Posterior cingulate gyrus (tissue), 11 donors: ENCODE measurements at regions of chr5 and their contacts with region 1.

Region 1: DNA sequence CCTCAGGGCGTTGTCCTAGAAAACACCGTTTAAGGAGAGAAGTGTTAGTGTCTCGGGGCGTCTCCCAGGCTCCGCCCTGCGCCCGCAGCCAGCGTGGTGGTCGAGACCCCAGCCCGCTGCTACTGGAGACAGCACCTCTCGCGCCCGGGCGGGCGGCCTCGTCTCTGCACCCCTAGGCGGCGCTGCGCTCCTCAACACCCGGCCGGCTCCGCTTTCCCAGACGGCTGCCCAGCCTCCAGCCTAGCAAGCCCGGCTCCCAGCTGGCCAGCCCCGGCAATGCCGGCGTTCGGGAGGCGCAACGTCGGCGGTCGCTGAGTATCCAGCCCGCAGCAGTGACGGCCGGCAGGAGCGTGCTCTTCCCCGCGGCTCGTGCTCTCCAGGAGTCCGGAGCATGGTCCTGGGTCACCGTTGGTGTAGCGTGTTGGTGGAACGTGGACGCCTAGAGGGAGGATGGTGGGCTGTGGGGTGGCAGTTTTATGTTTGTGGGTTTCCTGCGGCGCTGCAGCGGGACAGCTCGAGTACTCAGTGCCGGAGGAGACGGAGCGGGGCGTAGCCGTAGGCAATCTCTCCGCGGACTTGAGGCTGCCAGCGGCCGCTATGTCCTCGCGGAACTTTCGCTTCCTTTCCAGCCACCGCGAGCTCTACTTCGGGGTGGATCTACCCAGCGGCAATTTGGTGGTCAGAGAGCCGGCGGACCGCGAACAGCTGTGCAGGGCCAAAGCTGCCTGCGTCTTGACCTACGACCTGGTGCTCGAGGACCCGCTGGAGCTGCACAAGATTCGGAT is 536 bp downstream of the PCDHAC1 start:
- DNase-seq: peak; percentile 67 to 97 (median 84)

Region 2: DNA sequence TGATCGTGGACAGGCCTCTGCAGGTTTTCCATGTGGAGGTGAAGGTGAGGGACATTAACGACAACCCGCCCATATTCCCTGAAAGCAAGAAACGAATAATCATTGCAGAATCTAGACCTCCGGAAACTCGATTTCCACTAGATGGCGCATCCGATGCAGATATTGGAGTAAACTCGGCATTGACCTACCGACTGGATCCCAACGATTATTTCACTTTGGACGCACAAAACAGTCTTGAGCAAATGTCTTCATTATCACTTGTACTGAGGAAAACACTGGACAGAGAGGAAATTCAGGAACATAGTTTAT is 44.1 kb before region 1 on chr5:
- intact Hi-C with region 1: loop called (anchors 2 kb)
- DNase-seq: peak in 3 of 10 donors; percentile 6 to 55 (median 53)

Region 3: DNA sequence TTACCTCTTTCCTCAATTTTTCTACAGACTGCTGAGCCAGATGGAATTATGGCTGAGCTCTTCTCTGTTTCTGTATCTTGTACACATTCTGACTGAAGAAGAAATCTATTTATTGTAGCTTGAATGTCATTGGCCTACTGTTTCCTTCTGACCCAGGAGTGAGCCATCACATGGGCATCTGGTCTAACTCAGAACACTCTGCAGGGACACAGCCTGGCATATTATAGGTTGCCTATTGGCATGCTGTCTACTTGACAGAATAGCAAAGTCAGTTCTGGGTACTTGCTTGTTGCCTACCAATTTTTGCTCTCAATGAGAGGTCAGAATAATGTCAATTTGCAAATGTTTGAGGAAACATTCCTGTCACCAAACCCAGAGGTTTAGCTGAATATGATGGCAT is 46.9 kb after region 1 on chr5:
- intact Hi-C with region 1: loop called (anchors 5 kb)
- DNase-seq: no peak

Region 4: GRCh38 chr5:140988031-140988997 is 61.7 kb after region 1 on chr5:
- intact Hi-C with region 1: no loop called
- DNase-seq: no peak

Region 5: GRCh38 chr5:141250576-141250975 is 323.9 kb after region 1 on chr5:
- intact Hi-C with region 1: no loop called
- DNase-seq: no peak

Region 6: DNA sequence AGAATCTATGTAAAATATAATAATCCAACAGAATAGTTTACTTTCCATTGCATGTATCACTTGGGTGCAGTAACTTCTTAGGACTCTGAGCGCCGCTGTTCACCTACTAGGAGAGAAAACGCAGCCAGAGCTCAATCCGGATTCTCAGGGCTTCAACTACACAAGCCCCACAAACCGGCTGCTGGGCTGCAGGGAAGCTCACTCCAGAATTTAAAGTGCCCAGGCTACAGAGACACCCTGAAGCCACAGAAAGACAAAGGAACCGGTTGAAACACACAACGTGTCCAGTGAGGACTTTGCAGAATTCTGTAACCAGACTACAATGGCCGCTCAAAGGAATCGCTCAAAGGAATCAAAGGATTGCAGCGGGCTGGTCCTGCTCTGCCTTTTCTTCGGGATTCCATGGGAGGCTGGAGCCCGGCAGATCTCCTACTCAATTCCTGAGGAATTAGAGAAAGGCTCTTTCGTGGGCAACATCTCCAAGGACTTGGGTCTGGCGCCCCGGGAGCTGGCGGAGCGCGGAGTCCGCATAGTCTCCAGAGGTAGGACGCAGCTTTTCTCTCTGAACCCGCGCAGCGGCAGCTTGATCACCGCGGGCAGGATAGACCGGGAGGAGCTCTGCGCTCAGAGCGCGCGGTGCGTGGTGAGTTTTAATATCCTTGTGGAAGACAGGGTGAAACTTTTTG is 486.4 kb after region 1 on chr5 and contains the start of gene PCDHGA10:
- intact Hi-C with region 1: no loop called
- DNase-seq: peak in 3 of 10 donors; percentile 6 to 75 (median 73)